ENCODE measurements at regions of chr21 and their contacts with region 1.

Region 1: GRCh38 chr21:35051287-35051818 is 2.3 kb upstream of the RUNX1 start:
- DNase-seq: peak; percentile 91
- H3K4me3 Mint-ChIP-seq: peak overlapping the region; percentile 36
- H3K27ac Mint-ChIP-seq: peak overlapping the region; percentile 99
- H3K4me1 Mint-ChIP-seq: peaks cover 53% of the 10 kb centered on the region
- H3K27me3 Mint-ChIP-seq: no peaks in the 10 kb centered on the region

Region 2: DNA sequence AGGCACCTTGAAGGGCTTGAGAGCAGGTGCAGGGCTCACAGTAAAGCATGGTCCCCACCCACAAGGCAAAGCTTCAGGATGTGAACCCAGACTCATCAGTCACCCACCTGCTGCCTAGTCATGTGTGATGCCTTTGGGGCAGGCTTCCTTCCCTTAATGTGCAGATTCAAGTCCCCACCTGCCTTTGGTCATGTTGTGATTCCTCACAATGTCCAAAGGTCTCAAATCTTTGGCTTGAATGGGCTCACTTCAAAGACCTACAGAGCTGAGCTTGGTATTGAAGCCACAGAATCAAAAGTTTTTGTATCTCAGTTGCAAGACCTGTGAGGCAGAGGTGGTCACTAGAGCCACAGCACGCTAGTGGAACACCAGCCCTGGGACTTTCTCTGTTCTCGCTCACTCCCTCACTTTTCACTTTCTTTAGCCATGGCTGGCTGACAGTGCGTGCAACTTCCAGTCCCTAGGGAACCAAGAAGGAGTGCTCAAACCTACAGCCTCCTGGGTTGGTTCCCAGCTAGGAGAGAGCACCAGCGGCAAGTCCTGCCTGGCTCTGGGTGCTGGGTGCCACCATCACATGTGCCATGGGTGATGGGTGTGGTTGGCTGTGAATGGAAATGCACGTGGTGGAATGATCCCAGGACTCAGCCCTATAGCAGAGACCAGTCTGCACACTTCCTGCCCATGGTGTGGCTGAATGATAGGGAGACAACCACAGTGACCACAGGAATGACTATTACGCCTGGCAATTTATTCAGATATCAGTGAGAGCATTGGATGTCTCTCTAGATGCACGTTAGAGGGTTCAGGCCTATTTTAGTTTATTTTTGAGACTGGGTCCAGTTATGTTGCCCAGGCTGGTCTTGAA is 408.9 kb before region 1 on chr21:
- CTCF ChIA-PET with region 1: no interaction called
- POLR2A ChIA-PET with region 1: no interaction called
- intact Hi-C with region 1: no loop called
- DNase-seq: no peak
- H3K4me3 Mint-ChIP-seq: no peak overlapping the region
- H3K27ac Mint-ChIP-seq: no peak overlapping the region
- H3K4me1 Mint-ChIP-seq: peaks cover 25% of the 10 kb centered on the region
- H3K27me3 Mint-ChIP-seq: no peaks in the 10 kb centered on the region

Region 3: GRCh38 chr21:34888569-34889319 is 162.6 kb before region 1 on chr21:
- CTCF ChIA-PET with region 1: interaction called, 120 read pairs
- POLR2A ChIA-PET with region 1: interaction called, 267 read pairs
- intact Hi-C with region 1: loop called (anchors 1 kb)
- DNase-seq: peak; percentile 92
- H3K4me3 Mint-ChIP-seq: peak overlapping the region; percentile 89
- H3K27ac Mint-ChIP-seq: peak overlapping the region; percentile 100
- H3K4me1 Mint-ChIP-seq: peaks cover 44% of the 10 kb centered on the region
- H3K27me3 Mint-ChIP-seq: peaks cover 5% of the 10 kb centered on the region

Region 4: DNA sequence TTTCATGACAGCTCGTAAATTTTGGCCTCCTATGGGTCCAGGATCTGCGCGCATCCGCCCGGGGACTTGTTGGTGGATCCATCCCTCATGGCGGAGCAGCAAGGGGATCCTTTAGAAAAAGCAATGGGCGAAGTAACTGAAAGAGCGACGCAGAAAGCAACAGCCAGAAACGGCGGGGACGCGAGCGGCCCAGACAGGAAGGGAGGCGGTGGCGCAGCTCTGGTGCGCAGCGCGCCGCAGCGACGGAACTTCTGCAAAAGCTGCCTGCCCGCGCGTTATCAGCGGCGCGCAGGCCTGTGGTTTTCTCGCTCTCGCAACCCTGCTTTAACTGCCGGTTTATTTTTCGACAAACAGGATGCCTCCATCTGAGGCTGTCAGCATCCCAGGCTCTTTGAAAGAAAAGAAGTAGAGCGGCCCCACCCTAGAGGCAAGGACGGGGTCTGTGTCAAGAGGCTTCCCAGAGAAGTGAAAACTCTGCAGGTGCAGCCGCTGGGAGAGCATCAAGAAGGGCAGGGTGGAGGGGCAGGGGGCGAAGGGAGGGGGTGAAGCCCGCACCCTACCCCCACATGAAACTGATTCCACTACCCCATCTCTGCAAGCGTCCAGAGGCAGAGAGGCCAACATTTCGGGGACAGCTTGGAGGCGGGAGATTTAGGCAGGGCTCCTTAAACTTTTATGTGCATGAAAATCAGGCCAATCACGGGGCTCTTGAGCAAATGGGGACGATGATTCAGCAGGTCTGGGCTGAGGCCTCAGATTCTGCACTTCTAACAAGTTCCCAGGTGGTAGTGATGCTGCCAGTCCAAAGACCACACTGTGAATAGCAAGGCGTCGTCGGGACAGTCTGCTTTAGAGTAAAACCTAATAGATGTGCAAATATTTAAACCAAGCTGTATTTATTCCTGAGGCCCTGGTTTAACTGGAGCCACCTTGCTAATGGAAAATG is 24.5 kb before region 1 on chr21:
- CTCF ChIA-PET with region 1: interaction called, 17 read pairs
- POLR2A ChIA-PET with region 1: interaction called, 83 read pairs
- intact Hi-C with region 1: no loop called
- DNase-seq: peak; percentile 89
- H3K4me3 Mint-ChIP-seq: peak overlapping the region; percentile 75
- H3K27ac Mint-ChIP-seq: peak overlapping the region; percentile 91
- H3K4me1 Mint-ChIP-seq: peaks cover 83% of the 10 kb centered on the region
- H3K27me3 Mint-ChIP-seq: no peaks in the 10 kb centered on the region

Region 5: DNA sequence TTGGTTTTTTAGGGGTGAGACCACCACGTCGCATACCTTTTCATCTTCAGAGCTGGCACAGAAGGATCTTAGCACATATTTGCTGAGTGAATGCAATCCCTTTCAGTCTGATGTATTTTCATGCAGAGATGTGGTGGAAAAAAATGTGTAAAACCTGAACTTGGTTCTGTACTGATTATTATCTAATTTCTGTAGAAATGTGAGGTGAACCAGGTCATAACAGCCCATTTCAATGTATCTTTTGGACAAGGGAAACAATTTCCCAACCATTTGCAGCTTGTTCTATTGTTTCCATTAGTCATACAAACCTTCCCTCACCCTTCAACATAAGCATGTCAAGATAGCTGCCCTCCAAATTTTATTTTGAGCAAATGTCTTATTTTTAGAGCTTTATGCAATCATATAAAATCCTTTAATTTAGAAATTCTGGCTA is 44.5 kb after region 1 on chr21:
- CTCF ChIA-PET with region 1: interaction called, 19 read pairs
- POLR2A ChIA-PET with region 1: interaction called, 71 read pairs
- intact Hi-C with region 1: loop called (anchors 1 kb)
- DNase-seq: peak; percentile 42
- H3K4me3 Mint-ChIP-seq: no peak overlapping the region
- H3K27ac Mint-ChIP-seq: peak overlapping the region; percentile 83
- H3K4me1 Mint-ChIP-seq: peaks cover 48% of the 10 kb centered on the region
- H3K27me3 Mint-ChIP-seq: peaks cover 2% of the 10 kb centered on the region

Region 6: DNA sequence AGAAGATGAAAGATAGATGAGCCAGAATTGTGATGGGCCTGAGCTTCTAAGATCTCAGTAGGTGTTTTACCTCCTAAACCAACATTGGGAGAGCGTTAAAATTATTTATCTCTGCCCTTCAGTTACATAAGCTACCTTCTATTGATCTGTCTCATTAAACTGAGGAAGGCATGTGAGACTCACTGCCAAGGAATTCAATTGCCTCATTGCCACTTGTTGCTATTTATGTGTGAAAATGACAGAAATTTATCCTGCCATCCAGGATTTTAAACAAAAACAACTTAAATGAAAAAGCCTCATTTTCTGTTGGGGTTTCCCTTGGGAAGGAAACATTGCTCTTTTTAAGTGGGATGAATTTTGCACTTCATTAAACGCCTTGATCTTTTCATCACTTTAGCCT is 76.5 kb after region 1 on chr21:
- CTCF ChIA-PET with region 1: no interaction called
- POLR2A ChIA-PET with region 1: no interaction called
- intact Hi-C with region 1: no loop called
- DNase-seq: no peak
- H3K4me3 Mint-ChIP-seq: no peak overlapping the region
- H3K27ac Mint-ChIP-seq: no peak overlapping the region
- H3K4me1 Mint-ChIP-seq: no peaks in the 10 kb centered on the region
- H3K27me3 Mint-ChIP-seq: peaks cover 2% of the 10 kb centered on the region

Region 7: GRCh38 chr21:35342440-35342839 is 291.1 kb after region 1 on chr21:
- CTCF ChIA-PET with region 1: no interaction called
- POLR2A ChIA-PET with region 1: interaction called, 3 read pairs
- intact Hi-C with region 1: loop called (anchors 1 kb)
- DNase-seq: peak; percentile 66
- H3K4me3 Mint-ChIP-seq: peak overlapping the region; percentile 62
- H3K27ac Mint-ChIP-seq: peak overlapping the region; percentile 98
- H3K4me1 Mint-ChIP-seq: peaks cover 52% of the 10 kb centered on the region
- H3K27me3 Mint-ChIP-seq: no peaks in the 10 kb centered on the region

Region 8: GRCh38 chr21:35417762-35418161 is 366.4 kb after region 1 on chr21:
- CTCF ChIA-PET with region 1: no interaction called
- POLR2A ChIA-PET with region 1: no interaction called
- intact Hi-C with region 1: no loop called
- DNase-seq: no peak
- H3K4me3 Mint-ChIP-seq: no peak overlapping the region
- H3K27ac Mint-ChIP-seq: no peak overlapping the region
- H3K4me1 Mint-ChIP-seq: no peaks in the 10 kb centered on the region
- H3K27me3 Mint-ChIP-seq: peaks cover 13% of the 10 kb centered on the region

Measured in activated CD4-positive, alpha-beta memory T cell treated with anti-CD3 and anti-CD28 coated beads for 36 hours (primary cell).